ENCODE measurements at regions of chr1 and their contacts with region 1.

Region 1: GRCh38 chr1:42462828-42463763 is at the start of gene CCDC30:
- DNase-seq: peak; percentile 95 to 99
- ATAC-seq: peak; percentile 95 to 100 (median 96)
- H3K4me3 ChIP-seq: peak within 1 kb of the TSS; percentile 40
- H3K4me3 Mint-ChIP-seq: peak within 1 kb of the TSS; percentile 87
- H3K27ac ChIP-seq: peak within 1 kb of the TSS; percentile 74
- H3K27ac Mint-ChIP-seq: peak within 1 kb of the TSS; percentile 92
- H3K4me1 ChIP-seq: peaks cover 12% of the 10 kb centered on the region
- H3K4me1 Mint-ChIP-seq: peaks cover 26 to 35% of the 10 kb centered on the region in 2 donors
- H3K27me3 ChIP-seq: no peaks in the 10 kb centered on the region
- H3K27me3 Mint-ChIP-seq: no peaks in the 10 kb centered on the region
- CTCF ChIP-seq: no peak
- total RNA-seq, gene CCDC30: 4.5 to 6.1 (median 5.0) TPM

Region 2: GRCh38 chr1:42681741-42682483 is 218.8 kb after region 1 on chr1 and contains the start of gene YBX1:
- intact Hi-C with region 1: loop called (anchors 5 kb)
- DNase-seq: peak; percentile 96 to 97
- ATAC-seq: peak; percentile 88 to 96 (median 91)
- H3K4me3 ChIP-seq: peak within 1 kb of the TSS; percentile 79
- H3K4me3 Mint-ChIP-seq: peak within 1 kb of the TSS; percentile 100
- H3K27ac ChIP-seq: peak within 1 kb of the TSS; percentile 88
- H3K27ac Mint-ChIP-seq: peak within 1 kb of the TSS; percentile 93 to 98
- H3K4me1 ChIP-seq: peaks cover 16% of the 10 kb centered on the region
- H3K4me1 Mint-ChIP-seq: peaks cover 46 to 51% of the 10 kb centered on the region in 2 donors
- H3K27me3 ChIP-seq: no peaks in the 10 kb centered on the region
- H3K27me3 Mint-ChIP-seq: no peaks in the 10 kb centered on the region
- CTCF ChIP-seq: no peak
- total RNA-seq, gene YBX1: 239 to 305 (median 279) TPM

Region 3: GRCh38 chr1:42931108-42931539 is 468.0 kb after region 1 on chr1:
- intact Hi-C with region 1: loop called (anchors 10 kb)
- DNase-seq: peak; percentile 64 to 85
- ATAC-seq: peak; percentile 39 to 58 (median 40)
- H3K4me3 ChIP-seq: no peak overlapping the region
- H3K4me3 Mint-ChIP-seq: peak overlapping the region; percentile 88
- H3K27ac ChIP-seq: peak overlapping the region; percentile 92
- H3K27ac Mint-ChIP-seq: peak overlapping the region; percentile 96 to 98
- H3K4me1 ChIP-seq: peaks cover 77% of the 10 kb centered on the region
- H3K4me1 Mint-ChIP-seq: peaks cover 78 to 86% of the 10 kb centered on the region in 2 donors
- H3K27me3 ChIP-seq: no peaks in the 10 kb centered on the region
- H3K27me3 Mint-ChIP-seq: no peaks in the 10 kb centered on the region
- CTCF ChIP-seq: peak; percentile 69

Measured in natural killer cell (primary cell).